ENCODE measurements at regions of chr2 and their contacts with region 1.

Region 1: GRCh38 chr2:152036611-152037469 is 62.0 kb downstream of the CACNB4 start:
- DNase-seq: peak; percentile 42 to 76
- ATAC-seq: peak; percentile 91 to 94
- H3K4me3 ChIP-seq: no peak overlapping the region
- H3K27ac ChIP-seq: no peak overlapping the region
- H3K4me1 ChIP-seq: no peaks in the 10 kb centered on the region
- CTCF ChIP-seq: peak; percentile 93
- EP300 ChIP-seq: no peak
- POLR2A ChIP-seq: no peak
- RAD21 ChIP-seq: peak; percentile 95 to 96

Region 2: GRCh38 chr2:152025678-152026287 is 11.1 kb before region 1 on chr2:
- CTCF ChIA-PET with region 1: interaction called, 58 read pairs
- POLR2A ChIA-PET with region 1: no interaction called
- DNase-seq: peak; percentile 40 to 85
- ATAC-seq: peak; percentile 98 to 99
- H3K4me3 ChIP-seq: peak overlapping the region; percentile 34
- H3K27ac ChIP-seq: no peak overlapping the region
- H3K4me1 ChIP-seq: no peaks in the 10 kb centered on the region
- CTCF ChIP-seq: peak; percentile 100
- EP300 ChIP-seq: no peak
- POLR2A ChIP-seq: no peak
- RAD21 ChIP-seq: peak; percentile 70 to 92

Region 3: GRCh38 chr2:152047819-152048471 is 11.1 kb after region 1 on chr2:
- CTCF ChIA-PET with region 1: interaction called, 12 read pairs
- POLR2A ChIA-PET with region 1: no interaction called
- DNase-seq: no peak
- ATAC-seq: peak in 1 of 2 experiments; percentile 72; a peak in 3 of 6 replicates
- H3K4me3 ChIP-seq: no peak overlapping the region
- H3K27ac ChIP-seq: no peak overlapping the region
- H3K4me1 ChIP-seq: no peaks in the 10 kb centered on the region
- CTCF ChIP-seq: no peak; the same call in 1 of the 3 replicates
- EP300 ChIP-seq: no peak
- POLR2A ChIP-seq: no peak
- RAD21 ChIP-seq: no peak

Region 4: DNA sequence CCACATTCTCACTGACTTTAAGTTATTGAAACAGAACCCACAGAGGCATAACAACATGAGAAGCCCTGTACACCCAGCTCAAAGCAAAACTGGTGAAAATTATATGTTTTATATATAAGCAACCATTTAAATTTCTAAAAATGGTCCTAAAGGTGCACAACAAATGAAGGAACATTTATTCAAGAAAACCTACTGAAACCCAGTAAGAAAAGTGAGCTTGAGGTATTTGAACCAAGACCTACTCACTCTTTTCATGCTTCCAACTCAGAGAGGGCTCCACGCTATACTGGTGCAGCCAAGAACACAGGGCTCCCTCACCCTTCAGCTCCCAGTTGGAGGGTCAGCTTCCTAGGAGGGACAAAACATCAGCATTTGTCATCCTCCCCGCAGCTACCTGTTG is 64.1 kb after region 1 on chr2:
- CTCF ChIA-PET with region 1: interaction called, 10 read pairs
- POLR2A ChIA-PET with region 1: no interaction called
- DNase-seq: no peak
- ATAC-seq: no peak
- H3K4me3 ChIP-seq: no peak overlapping the region
- H3K27ac ChIP-seq: no peak overlapping the region
- H3K4me1 ChIP-seq: peaks cover 8% of the 10 kb centered on the region; the same call in 1 of the 3 replicates
- CTCF ChIP-seq: no peak
- EP300 ChIP-seq: no peak
- POLR2A ChIP-seq: no peak
- RAD21 ChIP-seq: no peak

Region 5: GRCh38 chr2:152166633-152167032 is 129.8 kb after region 1 on chr2:
- CTCF ChIA-PET with region 1: interaction called, 41 read pairs
- POLR2A ChIA-PET with region 1: no interaction called
- DNase-seq: no peak
- ATAC-seq: no peak
- H3K4me3 ChIP-seq: no peak overlapping the region
- H3K27ac ChIP-seq: no peak overlapping the region
- H3K4me1 ChIP-seq: peaks cover 54% of the 10 kb centered on the region
- CTCF ChIP-seq: no peak
- EP300 ChIP-seq: no peak
- POLR2A ChIP-seq: no peak
- RAD21 ChIP-seq: no peak

Region 6: GRCh38 chr2:152175458-152176325 is 138.9 kb after region 1 on chr2 and contains the start of gene STAM2:
- CTCF ChIA-PET with region 1: interaction called, 41 read pairs
- POLR2A ChIA-PET with region 1: no interaction called
- DNase-seq: peak; percentile 88 to 93
- ATAC-seq: peak; percentile 91
- H3K4me3 ChIP-seq: peak within 1 kb of the TSS; percentile 64
- H3K27ac ChIP-seq: peak within 1 kb of the TSS; percentile 94 to 97
- H3K4me1 ChIP-seq: peaks cover 33% of the 10 kb centered on the region
- CTCF ChIP-seq: peak; percentile 92
- EP300 ChIP-seq: no peak
- POLR2A ChIP-seq: peak; percentile 84
- RAD21 ChIP-seq: peak; percentile 92 to 97
- polyA plus RNA-seq, gene STAM2: 25.7 and 34.5 TPM in 2 replicates